Activated naive CD4-positive, alpha-beta T cell treated with anti-CD3 and anti-CD28 coated beads for 36 hours (primary cell): ENCODE measurements at regions of chrX and their contacts with region 1.

Region 1: GRCh38 chrX:39859991-39860861 is 237.5 kb downstream of the BCOR start:
- DNase-seq: peak; percentile 94
- H3K4me3 Mint-ChIP-seq: peak overlapping the region; percentile 9
- H3K27ac Mint-ChIP-seq: peak overlapping the region; percentile 97
- H3K4me1 Mint-ChIP-seq: peaks cover 53% of the 10 kb centered on the region
- H3K27me3 Mint-ChIP-seq: no peaks in the 10 kb centered on the region

Region 2: GRCh38 chrX:39613482-39613921 is 246.7 kb before region 1 on chrX:
- CTCF ChIA-PET with region 1: no interaction called
- intact Hi-C with region 1: loop called (anchors 1 kb)
- DNase-seq: peak; percentile 29
- H3K4me3 Mint-ChIP-seq: peak overlapping the region; percentile 70
- H3K27ac Mint-ChIP-seq: peak overlapping the region; percentile 87
- H3K4me1 Mint-ChIP-seq: peaks cover 22% of the 10 kb centered on the region
- H3K27me3 Mint-ChIP-seq: no peaks in the 10 kb centered on the region

Region 3: GRCh38 chrX:39874202-39874816 is 14.1 kb after region 1 on chrX:
- CTCF ChIA-PET with region 1: no interaction called
- intact Hi-C with region 1: loop called (anchors 1 kb)
- DNase-seq: peak; percentile 89
- H3K4me3 Mint-ChIP-seq: no peak overlapping the region
- H3K27ac Mint-ChIP-seq: peak overlapping the region; percentile 89
- H3K4me1 Mint-ChIP-seq: peaks cover 49% of the 10 kb centered on the region
- H3K27me3 Mint-ChIP-seq: no peaks in the 10 kb centered on the region

Region 4: DNA sequence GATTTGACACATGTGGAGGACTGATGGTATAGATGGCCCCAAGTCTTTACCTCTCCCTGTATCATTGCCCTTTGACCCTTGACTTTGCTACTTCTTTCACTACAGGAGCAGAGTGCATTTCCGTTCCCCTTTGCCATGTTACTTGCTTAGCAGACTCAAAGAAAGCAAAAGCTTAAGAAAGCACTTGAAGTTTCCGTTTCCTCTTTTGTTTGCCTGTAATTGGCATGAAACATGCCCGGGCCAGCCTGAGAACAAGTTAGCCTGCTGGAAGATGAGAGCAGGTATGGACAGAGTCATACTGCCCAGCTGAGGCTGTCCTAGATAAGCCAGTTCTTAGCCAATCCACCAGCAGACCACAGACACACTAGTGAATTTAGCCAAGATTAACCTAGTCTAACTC is 31.6 kb after region 1 on chrX:
- CTCF ChIA-PET with region 1: interaction called, 3 read pairs
- intact Hi-C with region 1: loop called (anchors 1 kb)
- DNase-seq: peak; percentile 27
- H3K4me3 Mint-ChIP-seq: no peak overlapping the region
- H3K27ac Mint-ChIP-seq: peak overlapping the region; percentile 75
- H3K4me1 Mint-ChIP-seq: peaks cover 27% of the 10 kb centered on the region
- H3K27me3 Mint-ChIP-seq: no peaks in the 10 kb centered on the region

Region 5: GRCh38 chrX:40022421-40022820 is 162.2 kb after region 1 on chrX:
- CTCF ChIA-PET with region 1: no interaction called
- intact Hi-C with region 1: loop called (anchors 1 kb)
- DNase-seq: peak; percentile 16
- H3K4me3 Mint-ChIP-seq: no peak overlapping the region
- H3K27ac Mint-ChIP-seq: no peak overlapping the region
- H3K4me1 Mint-ChIP-seq: peaks cover 14% of the 10 kb centered on the region
- H3K27me3 Mint-ChIP-seq: no peaks in the 10 kb centered on the region

Region 6: GRCh38 chrX:40175511-40176350 is 315.5 kb after region 1 on chrX:
- CTCF ChIA-PET with region 1: no interaction called
- intact Hi-C with region 1: loop called (anchors 1 kb)
- DNase-seq: peak; percentile 72
- H3K4me3 Mint-ChIP-seq: peak overlapping the region; percentile 91
- H3K27ac Mint-ChIP-seq: peak overlapping the region; percentile 99
- H3K4me1 Mint-ChIP-seq: peaks cover 23% of the 10 kb centered on the region
- H3K27me3 Mint-ChIP-seq: no peaks in the 10 kb centered on the region